Spleen (tissue), 13 donors: ENCODE measurements at regions of chr12 and their contacts with region 1.

Region 1: DNA sequence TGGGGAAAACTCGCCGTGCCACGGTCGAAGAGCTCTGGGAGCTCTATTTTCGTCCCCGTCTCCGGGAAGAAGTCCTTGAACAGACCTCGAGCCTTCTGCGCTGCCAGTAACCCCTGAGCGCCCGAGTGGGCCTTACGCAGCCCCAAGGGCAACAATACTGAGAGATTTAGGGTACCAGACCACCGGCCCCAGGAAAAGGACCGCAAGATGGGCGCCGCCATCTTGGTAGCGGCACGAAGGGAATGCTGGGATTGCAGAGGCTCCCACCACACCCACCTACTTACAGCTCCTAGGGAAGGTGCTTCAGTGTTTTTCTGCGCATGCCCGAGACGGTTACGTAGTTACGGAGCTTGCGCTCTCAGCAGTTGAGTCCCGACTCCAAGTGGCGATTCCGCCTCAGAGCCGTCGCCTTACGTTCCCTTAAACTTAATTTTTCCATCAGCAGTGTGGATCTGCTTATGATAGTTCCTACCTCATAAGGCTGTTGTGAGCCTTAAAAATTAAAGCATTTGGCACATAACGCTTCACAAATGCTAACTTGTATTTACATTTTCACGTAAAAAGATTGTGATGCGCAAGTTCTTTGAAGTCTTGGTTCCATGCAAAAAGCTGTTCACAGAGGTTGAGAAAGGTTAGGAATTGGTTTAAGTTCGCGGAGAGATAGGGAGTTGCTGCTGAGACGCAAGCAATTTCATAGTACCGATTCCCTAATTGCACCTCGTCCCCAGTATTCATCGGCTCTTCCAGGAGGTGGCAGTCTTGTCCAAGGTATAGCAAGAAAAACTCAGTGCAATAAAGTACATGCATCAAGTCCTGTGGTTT is at the start of gene YARS2:
- DNase-seq: peak; percentile 95
- H3K4me3 ChIP-seq: peak within 1 kb of the TSS; percentile 75 to 99 (median 96)
- H3K27ac ChIP-seq: peak within 1 kb of the TSS; percentile 88 to 94 (median 91)
- H3K4me1 ChIP-seq: peaks cover 9 to 31% (median 24%) of the 10 kb centered on the region in 6 donors
- H3K27me3 ChIP-seq: no peaks in the 10 kb centered on the region
- CTCF ChIP-seq: peak; percentile 80 to 95 (median 88)
- POLR2A ChIP-seq: peak in 1 of 3 donors; percentile 52
- total RNA-seq, gene YARS2: 13.2 to 23.5 (median 15.4) TPM

Region 2: DNA sequence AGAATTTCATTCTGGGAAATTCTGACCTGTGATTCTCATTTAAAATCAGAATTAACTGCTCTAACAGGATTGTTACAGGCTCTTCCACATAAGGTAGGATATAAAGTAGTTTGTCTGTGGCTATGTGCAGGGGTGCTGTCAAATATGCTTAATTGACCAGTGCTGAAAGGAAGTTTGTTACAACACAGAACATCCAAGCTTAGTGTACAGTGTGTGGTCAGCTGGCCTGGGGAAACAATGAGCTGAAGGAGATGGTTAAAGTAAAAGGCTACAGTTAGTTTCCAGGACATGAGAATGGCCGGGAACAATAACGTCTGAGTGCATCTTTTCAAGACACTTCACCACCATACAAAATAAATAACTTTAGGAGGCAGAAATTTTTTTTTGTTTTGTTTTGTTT is 72.7 kb after region 1 on chr12:
- intact Hi-C with region 1: no loop called
- DNase-seq: no peak
- H3K4me3 ChIP-seq: no peak overlapping the region
- H3K27ac ChIP-seq: no peak overlapping the region
- H3K4me1 ChIP-seq: no peaks in the 10 kb centered on the region
- H3K27me3 ChIP-seq: no peaks in the 10 kb centered on the region
- CTCF ChIP-seq: no peak
- POLR2A ChIP-seq: no peak

Region 3: DNA sequence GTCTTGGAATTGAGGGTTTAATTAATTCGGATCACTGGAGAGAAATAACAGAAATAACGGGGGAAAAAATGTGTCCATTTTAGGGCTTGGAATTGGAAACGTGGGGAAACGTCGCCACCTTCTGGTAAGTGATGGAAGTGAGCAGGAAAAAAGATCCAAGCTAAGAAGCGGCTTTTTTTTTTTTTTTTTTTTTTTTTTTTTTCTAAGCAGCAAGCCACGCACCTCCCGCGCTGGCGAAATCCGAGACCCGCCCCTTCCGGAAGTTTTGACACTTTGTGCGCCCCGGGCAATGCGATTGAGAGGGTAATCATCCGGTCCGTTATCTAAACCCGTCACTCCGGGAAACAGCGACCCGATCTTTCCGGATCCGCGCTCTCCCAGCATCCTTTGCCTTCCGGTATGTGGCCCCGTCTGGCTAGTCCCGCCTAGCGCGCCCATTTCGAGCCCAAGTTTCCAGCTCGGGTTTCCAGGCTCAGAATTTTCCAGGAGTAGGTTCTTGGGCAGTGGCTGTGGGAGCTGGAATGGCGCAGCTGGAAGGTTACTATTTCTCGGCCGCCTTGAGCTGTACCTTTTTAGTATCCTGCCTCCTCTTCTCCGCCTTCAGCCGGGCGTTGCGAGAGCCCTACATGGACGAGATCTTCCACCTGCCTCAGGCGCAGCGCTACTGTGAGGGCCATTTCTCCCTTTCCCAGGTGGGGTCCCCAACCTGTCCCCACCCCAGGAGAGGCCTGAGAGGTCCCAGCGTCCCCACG is 1266.4 kb after region 1 on chr12 and contains the start of gene ALG10:
- intact Hi-C with region 1: loop called (anchors 5 kb)
- DNase-seq: peak; percentile 97
- H3K4me3 ChIP-seq: peak within 1 kb of the TSS; percentile 37 to 80 (median 62)
- H3K27ac ChIP-seq: peak within 1 kb of the TSS; percentile 83 to 93 (median 90)
- H3K4me1 ChIP-seq: peaks cover 11 to 36% (median 22%) of the 10 kb centered on the region in 6 donors
- H3K27me3 ChIP-seq: no peaks in the 10 kb centered on the region
- CTCF ChIP-seq: peak; percentile 61 to 97 (median 81)
- POLR2A ChIP-seq: no peak
- total RNA-seq, gene ALG10: 10.9 to 23.8 (median 14.8) TPM

Region 4: GRCh38 chr12:34218165-34219045 is 1462.5 kb after region 1 on chr12:
- intact Hi-C with region 1: loop called (anchors 10 kb)
- DNase-seq: peak; percentile 82
- H3K4me3 ChIP-seq: peak overlapping the region; percentile 20 to 64 (median 34)
- H3K27ac ChIP-seq: peak overlapping the region in 7 of 8 donors; percentile 19 to 79 (median 74)
- H3K4me1 ChIP-seq: peaks cover 0 to 17% (median 10%) of the 10 kb centered on the region in 6 donors
- H3K27me3 ChIP-seq: peaks cover 0 to 20% (median 8%) of the 10 kb centered on the region in 7 donors
- CTCF ChIP-seq: peak; percentile 79 to 96 (median 88)
- POLR2A ChIP-seq: no peak